Activated T-helper 2 cell treated with anti-CD3 and anti-CD28 coated beads, Interferon-gamma antibody, Interleukin-2, Interleukin-4, amounts not matched to agents 10 μg/mL and 5 μg/mL and 100 μg/mL, durations not matched to agents 14 hours and 24 hours and 36 hours (primary cell): ENCODE measurements at regions of chr11 and their contacts with region 1.

Region 1: GRCh38 chr11:123020968-123021367 is 39.3 kb upstream of the BSX start:
- DNase-seq: no peak
- H3K4me3 Mint-ChIP-seq: no peak overlapping the region
- H3K27ac Mint-ChIP-seq: no peak overlapping the region
- H3K4me1 Mint-ChIP-seq: peaks cover 7% of the 10 kb centered on the region
- H3K27me3 Mint-ChIP-seq: peaks cover 16% of the 10 kb centered on the region

Region 2: DNA sequence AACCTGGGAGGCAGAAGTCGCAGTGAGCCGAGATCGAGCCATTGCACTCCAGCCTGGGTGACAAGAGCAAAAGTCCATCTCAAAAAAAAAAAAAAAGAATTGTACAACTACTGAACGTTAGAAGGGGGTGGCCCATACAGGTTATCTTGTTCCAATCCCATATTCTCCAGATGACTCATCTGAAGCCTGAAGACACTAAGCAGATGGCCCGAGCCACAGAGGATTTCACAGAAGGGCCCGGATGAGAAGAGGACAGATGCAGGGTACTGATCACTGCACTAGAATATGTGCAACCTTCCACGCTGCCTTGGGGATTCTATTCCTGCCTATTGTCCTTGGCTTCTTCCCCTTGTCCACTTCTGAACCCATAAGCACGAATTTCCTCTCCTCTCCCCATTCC is 436.3 kb before region 1 on chr11:
- intact Hi-C with region 1: loop called (anchors 5 kb)
- DNase-seq: no peak
- H3K4me3 Mint-ChIP-seq: no peak overlapping the region
- H3K27ac Mint-ChIP-seq: no peak overlapping the region
- H3K4me1 Mint-ChIP-seq: peaks cover 11% of the 10 kb centered on the region
- H3K27me3 Mint-ChIP-seq: no peaks in the 10 kb centered on the region

Region 3: DNA sequence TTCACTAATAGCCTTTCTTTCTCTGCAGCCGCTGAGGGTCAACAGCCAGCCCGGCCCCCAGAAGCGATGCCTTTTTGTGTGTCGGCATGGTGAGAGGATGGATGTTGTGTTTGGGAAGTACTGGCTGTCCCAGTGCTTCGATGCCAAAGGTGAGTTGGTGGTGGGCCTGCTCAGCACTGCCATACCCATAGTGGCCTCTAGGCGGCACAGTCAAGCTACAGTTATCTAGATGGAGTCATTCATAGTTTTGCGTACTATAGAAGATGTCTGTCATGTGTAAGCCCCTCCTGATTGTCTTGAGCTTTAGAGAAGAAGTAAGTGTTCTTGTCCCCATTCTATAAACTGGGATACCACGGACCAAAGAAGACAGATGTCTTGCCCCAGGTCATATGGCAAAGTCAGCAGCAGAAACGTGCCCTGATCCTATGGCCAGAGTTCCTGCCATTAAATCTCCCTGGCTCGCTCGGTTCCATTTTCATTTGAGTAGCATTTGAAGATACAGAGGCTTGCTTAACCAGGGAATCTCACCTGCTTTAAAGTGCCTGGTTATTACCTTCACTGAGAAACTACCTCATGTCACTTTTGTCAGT is 224.7 kb before region 1 on chr11:
- intact Hi-C with region 1: loop called (anchors 10 kb)
- DNase-seq: peak; percentile 39
- H3K4me3 Mint-ChIP-seq: no peak overlapping the region
- H3K27ac Mint-ChIP-seq: no peak overlapping the region
- H3K4me1 Mint-ChIP-seq: no peaks in the 10 kb centered on the region
- H3K27me3 Mint-ChIP-seq: no peaks in the 10 kb centered on the region

Region 4: GRCh38 chr11:122863704-122864326 is 157.2 kb before region 1 on chr11:
- intact Hi-C with region 1: loop called (anchors 2 kb)
- DNase-seq: no peak
- H3K4me3 Mint-ChIP-seq: no peak overlapping the region
- H3K27ac Mint-ChIP-seq: no peak overlapping the region
- H3K4me1 Mint-ChIP-seq: peaks cover 5% of the 10 kb centered on the region
- H3K27me3 Mint-ChIP-seq: peaks cover 40% of the 10 kb centered on the region

Region 5: DNA sequence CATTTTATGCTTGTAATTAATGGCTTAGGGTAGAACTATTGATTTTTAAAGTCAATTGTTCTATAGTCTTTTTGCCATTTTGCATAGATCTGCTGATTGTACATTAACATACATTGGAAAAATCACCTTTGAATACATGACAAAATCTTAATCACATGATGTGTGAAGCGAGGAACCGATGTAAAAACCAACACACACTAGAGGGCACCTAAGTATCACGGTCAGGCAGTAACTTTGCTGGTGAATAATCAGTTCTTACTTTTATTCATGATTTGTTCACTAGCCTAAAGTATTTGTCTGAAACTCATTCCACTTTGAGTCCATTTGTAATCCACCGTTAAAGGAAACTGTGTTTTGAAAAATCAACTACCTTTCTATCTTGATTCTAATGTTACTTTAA is 110.2 kb before region 1 on chr11:
- intact Hi-C with region 1: loop called (anchors 1 kb)
- DNase-seq: no peak
- H3K4me3 Mint-ChIP-seq: no peak overlapping the region
- H3K27ac Mint-ChIP-seq: no peak overlapping the region
- H3K4me1 Mint-ChIP-seq: no peaks in the 10 kb centered on the region
- H3K27me3 Mint-ChIP-seq: no peaks in the 10 kb centered on the region

Region 6: GRCh38 chr11:122981388-122982264 is 39.3 kb before region 1 on chr11 and contains the start of gene BSX:
- intact Hi-C with region 1: no loop called
- DNase-seq: peak; percentile 40
- H3K4me3 Mint-ChIP-seq: no peak within 1 kb of the TSS
- H3K27ac Mint-ChIP-seq: no peak within 1 kb of the TSS
- H3K4me1 Mint-ChIP-seq: peaks cover 10% of the 10 kb centered on the region
- H3K27me3 Mint-ChIP-seq: peaks cover 89% of the 10 kb centered on the region
- total RNA-seq, gene BSX: not detected in 2 replicates